Activated CD8-positive, alpha-beta T cell treated with anti-CD3 and anti-CD28 coated beads, Interleukin-2, amount 10 ng/mL, durations not matched to agents 7 days and 5 days (primary cell): ENCODE measurements at regions of chr3 and their contacts with region 1.

Region 1: GRCh38 chr3:3200632-3201212 is 21.2 kb upstream of the CRBN start:
- DNase-seq: peak; percentile 43
- ATAC-seq: no peak
- H3K4me3 Mint-ChIP-seq: no peak overlapping the region
- H3K27ac Mint-ChIP-seq: no peak overlapping the region
- H3K4me1 Mint-ChIP-seq: peaks cover 16% of the 10 kb centered on the region
- H3K27me3 Mint-ChIP-seq: peaks cover 5% of the 10 kb centered on the region

Region 2: GRCh38 chr3:2921903-2922302 is 278.8 kb before region 1 on chr3:
- CTCF ChIA-PET with region 1: no interaction called
- POLR2A ChIA-PET with region 1: no interaction called
- DNase-seq: no peak
- ATAC-seq: no peak
- H3K4me3 Mint-ChIP-seq: no peak overlapping the region
- H3K27ac Mint-ChIP-seq: no peak overlapping the region
- H3K4me1 Mint-ChIP-seq: no peaks in the 10 kb centered on the region
- H3K27me3 Mint-ChIP-seq: no peaks in the 10 kb centered on the region

Region 3: GRCh38 chr3:3027976-3028567 is 172.7 kb before region 1 on chr3:
- CTCF ChIA-PET with region 1: no interaction called
- POLR2A ChIA-PET with region 1: no interaction called
- DNase-seq: no peak
- ATAC-seq: peak; percentile 73
- H3K4me3 Mint-ChIP-seq: peak overlapping the region; percentile 13
- H3K27ac Mint-ChIP-seq: peak overlapping the region; percentile 43
- H3K4me1 Mint-ChIP-seq: peaks cover 10% of the 10 kb centered on the region
- H3K27me3 Mint-ChIP-seq: peaks cover 6% of the 10 kb centered on the region

Region 4: DNA sequence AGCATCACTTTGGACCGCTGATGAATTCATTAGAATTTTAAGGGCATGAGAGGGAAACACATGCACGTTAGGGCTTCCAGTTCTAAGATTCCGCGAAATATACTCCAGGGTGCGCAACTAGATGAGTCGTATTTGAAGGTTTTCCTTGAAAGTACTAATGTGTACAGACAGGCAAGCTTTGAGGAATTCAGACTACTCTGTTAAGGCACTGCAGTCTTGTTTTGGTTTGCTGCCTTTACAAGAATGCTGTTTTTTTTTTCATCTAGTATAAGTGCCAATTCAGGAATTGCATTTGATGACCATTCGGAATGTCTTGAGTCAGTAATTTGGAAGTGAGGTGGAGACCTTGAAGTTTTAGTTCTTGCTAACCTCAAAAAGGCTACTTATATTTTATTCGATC is 54.9 kb before region 1 on chr3:
- CTCF ChIA-PET with region 1: no interaction called
- POLR2A ChIA-PET with region 1: no interaction called
- DNase-seq: no peak
- ATAC-seq: no peak
- H3K4me3 Mint-ChIP-seq: no peak overlapping the region
- H3K27ac Mint-ChIP-seq: no peak overlapping the region
- H3K4me1 Mint-ChIP-seq: peaks cover 1% of the 10 kb centered on the region
- H3K27me3 Mint-ChIP-seq: no peaks in the 10 kb centered on the region

Region 5: GRCh38 chr3:3998140-3998922 is 797.6 kb after region 1 on chr3:
- CTCF ChIA-PET with region 1: interaction called, 81 read pairs
- POLR2A ChIA-PET with region 1: interaction called, 3 read pairs
- DNase-seq: peak; percentile 47
- ATAC-seq: no peak
- H3K4me3 Mint-ChIP-seq: no peak overlapping the region
- H3K27ac Mint-ChIP-seq: no peak overlapping the region
- H3K4me1 Mint-ChIP-seq: no peaks in the 10 kb centered on the region
- H3K27me3 Mint-ChIP-seq: no peaks in the 10 kb centered on the region

Region 6: GRCh38 chr3:4271834-4272233 is 1071.1 kb after region 1 on chr3:
- CTCF ChIA-PET with region 1: interaction called, 18 read pairs
- POLR2A ChIA-PET with region 1: no interaction called
- DNase-seq: no peak
- ATAC-seq: no peak
- H3K4me3 Mint-ChIP-seq: no peak overlapping the region
- H3K27ac Mint-ChIP-seq: no peak overlapping the region
- H3K4me1 Mint-ChIP-seq: peaks cover 10% of the 10 kb centered on the region
- H3K27me3 Mint-ChIP-seq: peaks cover 7% of the 10 kb centered on the region

Region 7: GRCh38 chr3:4290272-4290893 is 1089.7 kb after region 1 on chr3:
- CTCF ChIA-PET with region 1: interaction called, 32 read pairs
- POLR2A ChIA-PET with region 1: no interaction called
- DNase-seq: peak; percentile 49
- ATAC-seq: no peak
- H3K4me3 Mint-ChIP-seq: no peak overlapping the region
- H3K27ac Mint-ChIP-seq: no peak overlapping the region
- H3K4me1 Mint-ChIP-seq: peaks cover 5% of the 10 kb centered on the region
- H3K27me3 Mint-ChIP-seq: peaks cover 13% of the 10 kb centered on the region